ENCODE measurements at regions of chr4 and their contacts with region 1.

Region 1: GRCh38 chr4:110005461-110006056 is 92.9 kb downstream of the EGF start:
- DNase-seq: no peak
- H3K4me3 Mint-ChIP-seq: no peak overlapping the region
- H3K27ac Mint-ChIP-seq: no peak overlapping the region
- H3K4me1 Mint-ChIP-seq: peaks cover 23% of the 10 kb centered on the region
- H3K27me3 Mint-ChIP-seq: peaks cover 2% of the 10 kb centered on the region

Region 2: DNA sequence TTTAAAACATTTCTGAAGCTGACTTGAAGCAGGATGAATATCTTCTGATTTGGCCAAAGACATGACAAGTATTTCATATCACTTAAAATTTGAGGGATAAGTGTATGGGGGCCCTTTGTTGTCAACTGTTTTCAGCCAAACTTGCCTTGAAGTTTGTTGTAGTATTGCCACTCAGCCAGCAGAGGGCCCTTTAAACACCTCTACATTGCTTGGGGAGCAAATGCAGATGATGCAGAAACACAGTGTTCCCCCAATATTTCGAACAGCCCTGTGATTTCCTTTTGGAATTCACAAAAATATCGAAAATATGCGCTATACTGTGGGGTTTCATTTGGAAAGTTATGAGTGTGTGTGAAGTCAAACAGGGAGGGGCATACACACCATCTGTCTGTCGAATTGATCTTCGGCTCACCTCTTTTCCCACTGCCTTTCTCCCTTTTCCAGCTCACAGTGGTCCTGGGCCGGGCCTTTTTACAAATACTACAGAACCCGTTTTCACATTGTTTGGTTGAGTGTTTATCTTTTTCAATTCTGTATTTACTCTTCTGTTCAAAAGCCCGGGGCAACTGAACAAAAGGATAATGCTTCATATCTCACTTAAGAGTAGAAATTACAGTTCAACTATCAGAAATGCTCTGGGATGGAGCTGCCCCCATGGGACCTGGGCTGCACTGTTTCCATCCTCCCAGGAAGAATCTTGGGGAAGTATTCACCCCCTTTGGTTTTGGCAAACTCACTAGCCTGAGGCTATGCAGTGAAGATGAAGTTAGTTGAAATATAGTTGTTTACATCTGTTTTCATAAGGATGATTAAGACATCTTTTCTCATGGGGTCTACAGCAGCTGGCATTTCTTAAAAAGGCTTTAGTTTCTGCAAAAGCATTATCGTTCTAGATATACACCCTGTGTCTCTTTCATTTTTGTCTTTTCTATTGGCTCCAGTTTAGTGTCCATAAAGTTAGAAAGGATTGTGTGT is 44.7 kb after region 1 on chr4:
- intact Hi-C with region 1: loop called (anchors 2 kb)
- DNase-seq: peak; percentile 27
- H3K4me3 Mint-ChIP-seq: no peak overlapping the region
- H3K27ac Mint-ChIP-seq: no peak overlapping the region
- H3K4me1 Mint-ChIP-seq: peaks cover 52% of the 10 kb centered on the region
- H3K27me3 Mint-ChIP-seq: no peaks in the 10 kb centered on the region

Region 3: GRCh38 chr4:110062166-110062565 is 56.6 kb after region 1 on chr4:
- intact Hi-C with region 1: no loop called
- DNase-seq: no peak
- H3K4me3 Mint-ChIP-seq: no peak overlapping the region
- H3K27ac Mint-ChIP-seq: no peak overlapping the region
- H3K4me1 Mint-ChIP-seq: peaks cover 51% of the 10 kb centered on the region
- H3K27me3 Mint-ChIP-seq: no peaks in the 10 kb centered on the region

Region 4: GRCh38 chr4:110211007-110211769 is 205.6 kb after region 1 on chr4:
- intact Hi-C with region 1: loop called (anchors 1 kb)
- DNase-seq: no peak
- H3K4me3 Mint-ChIP-seq: no peak overlapping the region
- H3K27ac Mint-ChIP-seq: no peak overlapping the region
- H3K4me1 Mint-ChIP-seq: peaks cover 11% of the 10 kb centered on the region
- H3K27me3 Mint-ChIP-seq: peaks cover 4% of the 10 kb centered on the region

Region 5: GRCh38 chr4:110287130-110287529 is 281.6 kb after region 1 on chr4:
- intact Hi-C with region 1: loop called (anchors 5 kb)
- DNase-seq: no peak
- H3K4me3 Mint-ChIP-seq: peak overlapping the region; percentile 31
- H3K27ac Mint-ChIP-seq: peak overlapping the region; percentile 74
- H3K4me1 Mint-ChIP-seq: peaks cover 15% of the 10 kb centered on the region
- H3K27me3 Mint-ChIP-seq: peaks cover 13% of the 10 kb centered on the region

Region 6: GRCh38 chr4:110296892-110297291 is 291.3 kb after region 1 on chr4:
- intact Hi-C with region 1: loop called (anchors 5 kb)
- DNase-seq: no peak
- H3K4me3 Mint-ChIP-seq: no peak overlapping the region
- H3K27ac Mint-ChIP-seq: peak overlapping the region; percentile 20
- H3K4me1 Mint-ChIP-seq: peaks cover 15% of the 10 kb centered on the region
- H3K27me3 Mint-ChIP-seq: peaks cover 17% of the 10 kb centered on the region

Region 7: DNA sequence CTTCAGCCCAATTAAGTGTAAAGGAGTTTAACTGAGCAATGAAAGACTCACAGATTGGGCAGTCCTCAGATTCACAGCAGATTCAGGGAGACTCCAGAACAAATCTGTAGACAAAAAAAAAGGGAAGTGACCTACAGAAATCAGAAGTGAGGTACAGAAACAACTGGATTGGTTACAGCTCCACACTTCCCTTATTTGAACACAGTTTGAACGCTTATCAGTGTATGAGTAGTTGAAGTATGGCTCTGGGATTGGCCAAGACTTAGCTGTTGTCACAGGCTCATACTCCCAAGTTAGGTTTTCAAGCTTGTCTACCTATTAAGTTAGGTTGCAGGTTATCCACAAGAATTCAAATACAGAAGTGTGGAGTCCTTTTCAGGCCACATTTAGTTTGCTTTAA is 305.2 kb after region 1 on chr4:
- intact Hi-C with region 1: loop called (anchors 2 kb)
- DNase-seq: no peak
- H3K4me3 Mint-ChIP-seq: no peak overlapping the region
- H3K27ac Mint-ChIP-seq: no peak overlapping the region
- H3K4me1 Mint-ChIP-seq: no peaks in the 10 kb centered on the region
- H3K27me3 Mint-ChIP-seq: peaks cover 13% of the 10 kb centered on the region

Region 8: DNA sequence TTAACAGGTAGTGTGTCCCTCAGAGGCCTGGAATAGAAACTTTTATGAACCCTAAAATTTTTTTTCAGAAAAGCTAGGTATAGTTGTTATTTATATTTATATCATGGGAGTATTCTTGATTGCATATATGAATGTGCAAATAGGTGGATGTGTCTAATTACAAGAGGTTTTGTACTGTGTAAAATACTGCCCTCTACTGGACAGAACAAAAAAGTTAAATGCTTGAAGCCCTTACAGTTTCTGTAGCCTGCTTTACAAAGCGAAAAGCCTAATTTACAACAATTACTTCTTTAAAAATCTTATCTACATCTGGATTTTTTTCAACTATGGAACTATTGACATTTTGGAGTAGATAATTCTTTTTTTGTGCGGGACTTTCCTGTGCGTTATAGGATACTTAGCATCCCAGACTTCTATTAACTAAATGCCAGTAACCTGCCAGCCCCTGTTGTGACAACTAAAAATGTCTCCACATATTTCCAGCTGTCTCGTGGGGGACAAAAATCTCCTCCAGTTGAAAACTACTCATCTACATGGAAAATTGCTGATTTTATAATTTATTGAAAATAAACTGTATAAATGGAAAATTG is 505.5 kb after region 1 on chr4:
- intact Hi-C with region 1: loop called (anchors 1 kb)
- DNase-seq: no peak
- H3K4me3 Mint-ChIP-seq: no peak overlapping the region
- H3K27ac Mint-ChIP-seq: no peak overlapping the region
- H3K4me1 Mint-ChIP-seq: peaks cover 11% of the 10 kb centered on the region
- H3K27me3 Mint-ChIP-seq: peaks cover 4% of the 10 kb centered on the region